ENCODE measurements at regions of chr22 and their contacts with region 1.

Region 1: GRCh38 chr22:32622004-32622743 is 147.6 kb downstream of the FBXO7 start:
- DNase-seq: peak; percentile 65 to 78
- H3K4me3 ChIP-seq: peak overlapping the region in 1 of 2 donors; percentile 13
- H3K27ac ChIP-seq: peak overlapping the region; percentile 89 to 91
- H3K4me1 ChIP-seq: peaks cover 5 to 70% (median 62%) of the 10 kb centered on the region in 4 donors
- H3K27me3 ChIP-seq: no peaks in the 10 kb centered on the region
- CTCF ChIP-seq: no peak

Region 2: GRCh38 chr22:32850591-32851517 is 228.7 kb after region 1 on chr22:
- intact Hi-C with region 1: loop called (anchors 5 kb)
- DNase-seq: peak; percentile 95 to 96
- H3K4me3 ChIP-seq: no peak overlapping the region
- H3K27ac ChIP-seq: peak overlapping the region; percentile 78 to 96
- H3K4me1 ChIP-seq: peaks cover 5 to 90% (median 79%) of the 10 kb centered on the region in 4 donors
- H3K27me3 ChIP-seq: no peaks in the 10 kb centered on the region
- CTCF ChIP-seq: peak in 1 of 2 experiments; percentile 4

Region 3: DNA sequence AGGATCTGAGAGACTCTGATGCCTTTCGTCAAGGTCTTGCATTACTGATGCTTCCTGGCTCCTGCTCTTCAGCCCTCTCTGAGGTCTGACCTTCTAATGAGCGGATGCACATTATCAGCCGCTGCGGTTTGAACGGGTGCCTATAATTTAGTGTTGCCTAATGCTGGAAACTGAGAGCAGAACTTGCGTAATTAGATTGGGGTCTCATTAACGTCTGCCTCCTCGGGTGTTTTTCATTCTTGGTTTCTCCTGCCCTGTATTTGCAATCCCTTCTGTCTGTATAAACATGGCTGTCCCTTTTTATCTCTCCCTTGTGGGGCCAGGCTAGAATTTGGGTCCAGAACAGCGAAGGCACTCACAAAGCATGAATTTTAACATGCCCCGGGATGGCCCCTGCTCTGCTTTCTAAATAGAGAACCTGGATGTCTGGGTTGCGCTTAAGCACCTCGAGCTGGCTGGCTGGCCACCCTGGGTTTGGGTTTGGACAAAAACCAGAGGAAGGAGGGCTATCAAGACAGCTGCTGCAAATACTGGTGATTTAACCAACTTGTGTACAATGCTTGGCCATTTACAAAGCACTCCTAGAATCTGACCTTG is 298.0 kb after region 1 on chr22:
- intact Hi-C with region 1: no loop called
- DNase-seq: peak; percentile 81
- H3K4me3 ChIP-seq: no peak overlapping the region
- H3K27ac ChIP-seq: no peak overlapping the region
- H3K4me1 ChIP-seq: peaks cover 0 to 10% (median 8%) of the 10 kb centered on the region in 4 donors
- H3K27me3 ChIP-seq: peaks cover 0 to 6% of the 10 kb centered on the region in 2 donors
- CTCF ChIP-seq: no peak

Region 4: DNA sequence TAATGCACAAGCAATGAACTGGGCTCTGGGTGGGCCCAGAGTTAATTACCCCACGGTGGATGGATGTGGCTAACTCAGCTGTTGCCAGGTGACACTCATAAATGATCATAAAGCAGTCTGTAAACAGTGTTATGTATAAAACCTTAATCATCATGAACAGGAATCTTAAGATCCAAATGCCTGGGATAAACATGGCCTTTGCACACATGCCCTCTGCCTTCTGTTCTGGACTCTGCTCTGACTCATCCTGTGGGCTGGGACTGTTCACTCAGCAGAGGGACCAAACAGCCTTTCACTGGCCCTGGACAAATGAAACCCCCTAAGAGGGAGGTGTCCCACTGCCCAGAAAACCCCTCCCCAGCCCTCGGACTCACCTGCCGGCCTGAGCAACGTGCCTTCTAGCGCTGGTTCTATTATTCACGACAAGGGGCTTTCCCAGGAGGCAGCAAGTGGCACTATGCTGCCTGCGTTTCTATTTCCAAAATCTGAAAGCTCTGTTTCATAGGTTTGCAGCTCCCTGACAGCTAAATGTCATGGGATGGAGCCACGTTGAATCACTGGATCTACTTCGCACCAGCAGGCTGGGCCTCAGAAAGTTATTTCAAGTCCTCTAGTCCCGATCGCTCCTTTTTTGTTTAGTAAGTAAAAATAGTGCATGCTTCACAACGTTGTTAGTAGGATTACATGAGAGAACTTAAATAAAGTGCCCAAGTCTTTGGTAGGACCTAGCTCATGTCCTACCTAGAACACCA is 1245.1 kb after region 1 on chr22:
- intact Hi-C with region 1: loop called (anchors 5 kb)
- DNase-seq: no peak
- H3K4me3 ChIP-seq: no peak overlapping the region
- H3K27ac ChIP-seq: peak overlapping the region; percentile 81 to 82
- H3K4me1 ChIP-seq: peaks cover 0 to 80% (median 51%) of the 10 kb centered on the region in 4 donors
- H3K27me3 ChIP-seq: no peaks in the 10 kb centered on the region
- CTCF ChIP-seq: no peak